ENCODE measurements at regions of chr10 and their contacts with region 1.

Region 1: DNA sequence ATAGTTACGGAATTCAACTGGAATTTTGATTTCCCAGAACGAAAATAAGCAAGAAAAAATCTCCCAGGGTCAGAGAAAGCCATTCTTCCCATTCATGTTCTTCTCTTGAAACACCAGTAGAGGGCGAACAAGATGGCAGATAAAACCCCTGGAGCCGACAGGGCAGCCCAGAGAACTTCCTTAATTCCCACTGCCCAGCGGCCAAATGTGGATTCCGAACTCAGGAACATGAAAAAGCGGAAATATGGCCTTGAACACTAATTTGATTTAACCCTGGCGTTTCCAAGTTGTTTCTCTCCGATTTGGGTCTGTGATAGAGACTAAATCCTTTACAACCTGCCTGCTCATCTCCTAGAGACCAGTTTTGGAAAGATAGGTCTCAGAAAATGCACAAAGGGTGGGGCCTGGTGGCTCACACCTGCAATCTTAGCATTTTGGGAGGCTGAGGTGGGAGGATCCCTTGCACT is 100.7 kb upstream of the WAC start:
- DNase-seq: peak in 4 of 5 donors; percentile 21 to 44 (median 27)
- H3K4me3 ChIP-seq: peak overlapping the region in 1 of 2 donors; percentile 42
- H3K4me3 Mint-ChIP-seq: peak overlapping the region; percentile 27 to 73 (median 62)
- H3K27ac ChIP-seq: no peak overlapping the region
- H3K27ac Mint-ChIP-seq: peak overlapping the region in 1 of 7 donors; percentile 70
- H3K4me1 ChIP-seq: peaks cover 4% of the 10 kb centered on the region
- H3K4me1 Mint-ChIP-seq: peaks cover 3 to 9% (median 6%) of the 10 kb centered on the region in 4 donors
- H3K27me3 ChIP-seq: no peaks in the 10 kb centered on the region
- H3K27me3 Mint-ChIP-seq: peaks cover 0 to 2% of the 10 kb centered on the region in 2 donors

Region 2: GRCh38 chr10:28492116-28492920 is 60.1 kb after region 1 on chr10:
- CTCF ChIA-PET with region 1: no interaction called
- POLR2A ChIA-PET with region 1: no interaction called
- intact Hi-C with region 1: no loop called
- DNase-seq: no peak
- H3K4me3 ChIP-seq: no peak overlapping the region
- H3K4me3 Mint-ChIP-seq: no peak overlapping the region
- H3K27ac ChIP-seq: no peak overlapping the region
- H3K27ac Mint-ChIP-seq: no peak overlapping the region
- H3K4me1 ChIP-seq: no peaks in the 10 kb centered on the region
- H3K4me1 Mint-ChIP-seq: peaks cover 0 to 1% (median under 1%) of the 10 kb centered on the region in 4 donors
- H3K27me3 ChIP-seq: no peaks in the 10 kb centered on the region
- H3K27me3 Mint-ChIP-seq: peaks cover 3 to 15% of the 10 kb centered on the region in 2 donors

Region 3: GRCh38 chr10:28628184-28628893 is 196.1 kb after region 1 on chr10:
- CTCF ChIA-PET with region 1: interaction called, 6 read pairs
- POLR2A ChIA-PET with region 1: no interaction called
- intact Hi-C with region 1: loop called (anchors 5 kb)
- DNase-seq: peak; percentile 37 to 52 (median 47)
- H3K4me3 ChIP-seq: no peak overlapping the region
- H3K4me3 Mint-ChIP-seq: peak overlapping the region in 1 of 8 donors; percentile 16
- H3K27ac ChIP-seq: no peak overlapping the region
- H3K27ac Mint-ChIP-seq: no peak overlapping the region
- H3K4me1 ChIP-seq: peaks cover 3% of the 10 kb centered on the region
- H3K4me1 Mint-ChIP-seq: peaks cover 8 to 24% (median 13%) of the 10 kb centered on the region in 4 donors
- H3K27me3 ChIP-seq: peaks cover 5% of the 10 kb centered on the region
- H3K27me3 Mint-ChIP-seq: peaks cover 11 to 20% of the 10 kb centered on the region in 2 donors

Region 4: GRCh38 chr10:28981007-28981406 is 548.8 kb after region 1 on chr10:
- CTCF ChIA-PET with region 1: no interaction called
- POLR2A ChIA-PET with region 1: no interaction called
- intact Hi-C with region 1: no loop called
- DNase-seq: no peak
- H3K4me3 ChIP-seq: no peak overlapping the region
- H3K4me3 Mint-ChIP-seq: no peak overlapping the region
- H3K27ac ChIP-seq: no peak overlapping the region
- H3K27ac Mint-ChIP-seq: no peak overlapping the region
- H3K4me1 ChIP-seq: no peaks in the 10 kb centered on the region
- H3K4me1 Mint-ChIP-seq: no peaks in the 10 kb centered on the region
- H3K27me3 ChIP-seq: no peaks in the 10 kb centered on the region
- H3K27me3 Mint-ChIP-seq: peaks cover 3 to 4% of the 10 kb centered on the region in 2 donors

Region 5: DNA sequence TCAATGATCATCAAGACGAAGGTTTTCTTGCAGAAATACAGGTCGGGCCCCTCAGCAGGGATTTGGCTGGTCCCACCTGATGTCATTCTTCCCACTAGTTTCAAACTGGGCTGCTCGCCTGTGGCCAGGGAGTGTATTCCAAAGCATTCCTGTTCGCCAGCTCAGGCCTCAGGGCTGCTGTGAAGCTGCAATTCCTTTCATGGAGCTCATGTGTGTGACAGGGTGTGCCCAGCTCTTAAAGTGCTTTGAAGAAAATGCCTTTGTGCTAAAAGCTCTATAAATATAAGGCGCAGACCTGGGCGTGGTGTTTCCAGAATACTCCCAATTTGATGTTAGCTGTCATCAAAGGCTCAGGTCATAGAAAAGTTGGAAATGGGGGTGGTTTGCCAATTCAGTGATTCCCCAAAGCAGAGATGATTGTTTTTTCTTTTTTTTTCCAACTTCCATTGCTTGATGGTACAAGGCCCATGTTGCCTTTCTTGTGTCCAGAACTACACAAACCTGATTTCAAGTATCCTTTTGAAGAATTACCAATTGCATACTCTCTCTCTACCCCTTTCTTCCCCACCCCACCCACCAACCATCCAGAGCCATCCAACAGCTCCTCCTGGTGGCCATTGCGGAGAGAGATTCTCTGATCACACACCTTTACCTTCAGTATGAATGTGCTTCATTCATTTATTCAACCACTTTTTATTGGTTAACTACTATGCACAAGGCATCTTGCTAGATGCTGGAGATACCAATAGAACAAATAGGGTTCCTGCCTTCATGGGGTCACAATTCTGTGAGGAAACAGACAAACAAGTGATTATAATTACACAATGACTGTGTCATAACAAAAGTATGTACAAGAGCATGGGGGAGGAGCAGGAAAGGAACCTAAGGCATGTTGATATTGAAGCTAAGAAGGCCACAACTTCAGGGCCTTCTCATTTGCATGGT is 559.4 kb after region 1 on chr10:
- CTCF ChIA-PET with region 1: no interaction called
- POLR2A ChIA-PET with region 1: no interaction called
- intact Hi-C with region 1: loop called (anchors 2 kb)
- DNase-seq: peak in 4 of 5 donors; percentile 6 to 17 (median 12)
- H3K4me3 ChIP-seq: no peak overlapping the region
- H3K4me3 Mint-ChIP-seq: no peak overlapping the region
- H3K27ac ChIP-seq: no peak overlapping the region
- H3K27ac Mint-ChIP-seq: no peak overlapping the region
- H3K4me1 ChIP-seq: no peaks in the 10 kb centered on the region
- H3K4me1 Mint-ChIP-seq: no peaks in the 10 kb centered on the region
- H3K27me3 ChIP-seq: no peaks in the 10 kb centered on the region
- H3K27me3 Mint-ChIP-seq: peaks cover 1 to 7% of the 10 kb centered on the region in 2 donors

Measured in CD4-positive, alpha-beta memory T cell (primary cell).